ENCODE measurements at regions of chr2 and their contacts with region 1.

Region 1: DNA sequence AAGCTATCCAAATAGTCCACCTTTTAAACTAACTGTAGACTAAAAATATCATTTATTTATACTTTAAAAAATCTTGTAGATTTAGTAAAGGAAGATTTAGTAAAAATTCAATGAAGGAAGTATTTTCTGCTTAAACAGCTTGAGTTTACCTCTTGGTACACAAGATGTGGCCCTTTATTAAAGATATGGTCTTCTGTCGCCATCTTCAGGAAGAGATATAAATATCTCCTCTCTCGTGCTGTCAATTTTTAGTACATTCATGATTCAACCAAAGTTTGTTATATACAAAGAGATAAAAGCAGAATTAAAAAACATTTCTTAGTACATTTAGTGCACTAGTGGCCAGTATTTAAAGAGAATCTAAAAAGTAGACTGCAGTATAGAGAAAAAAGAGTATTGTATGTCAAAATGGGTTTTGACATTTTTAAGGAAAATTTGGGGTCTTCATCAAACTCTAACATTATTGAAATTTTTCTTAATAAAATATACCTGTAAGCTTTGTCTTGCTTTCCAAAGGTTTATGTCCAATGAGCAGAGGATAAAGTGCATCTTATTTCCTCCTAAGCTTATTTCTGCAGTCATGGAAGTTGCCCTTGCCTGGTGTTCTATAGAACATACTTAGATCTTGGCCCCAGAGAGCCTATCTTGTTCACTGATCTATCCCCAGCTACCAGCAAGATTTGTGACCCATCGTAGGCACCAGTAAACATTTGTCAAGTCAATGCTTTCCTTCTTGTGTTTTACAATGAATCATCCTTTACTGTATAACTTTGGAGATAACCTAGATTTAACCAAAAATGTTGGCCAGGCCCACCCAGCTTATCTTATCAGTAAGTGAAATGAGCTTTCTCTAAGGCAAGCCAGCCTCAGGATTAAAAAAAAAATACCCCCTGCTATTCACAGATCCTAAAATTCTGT is 18.5 kb upstream of the EML6 start:
- DNase-seq: no peak
- ATAC-seq: peak; percentile 51
- H3K4me3 Mint-ChIP-seq: no peak overlapping the region
- H3K27ac Mint-ChIP-seq: no peak overlapping the region
- H3K4me1 Mint-ChIP-seq: peaks cover 8% of the 10 kb centered on the region
- H3K27me3 Mint-ChIP-seq: peaks cover 8% of the 10 kb centered on the region
- CTCF ChIP-seq: no peak

Region 2: DNA sequence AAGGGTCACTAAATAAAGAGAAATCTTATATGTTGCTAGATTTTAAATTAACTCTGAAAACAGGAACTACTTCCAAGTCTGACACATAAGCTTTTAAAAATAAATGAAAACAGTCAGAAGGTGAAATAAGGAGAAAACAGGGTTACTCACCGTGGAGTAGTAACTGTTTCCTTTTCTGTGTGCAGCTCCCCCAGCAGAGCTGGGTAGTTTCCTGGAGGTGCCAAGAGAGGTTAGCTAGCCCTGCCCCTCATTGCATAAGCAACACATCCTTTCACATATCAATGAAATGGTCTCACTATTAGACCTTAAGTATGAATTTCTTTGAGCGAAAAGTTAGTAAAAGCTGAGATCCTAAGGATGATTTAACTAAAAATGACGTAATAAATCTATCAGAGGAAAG is 791.2 kb before region 1 on chr2:
- CTCF ChIA-PET with region 1: no interaction called
- POLR2A ChIA-PET with region 1: no interaction called
- intact Hi-C with region 1: loop called (anchors 10 kb)
- DNase-seq: no peak
- ATAC-seq: peak; percentile 85
- H3K4me3 Mint-ChIP-seq: no peak overlapping the region
- H3K27ac Mint-ChIP-seq: peak overlapping the region; percentile 27
- H3K4me1 Mint-ChIP-seq: peaks cover 12% of the 10 kb centered on the region
- H3K27me3 Mint-ChIP-seq: no peaks in the 10 kb centered on the region
- CTCF ChIP-seq: no peak

Region 3: DNA sequence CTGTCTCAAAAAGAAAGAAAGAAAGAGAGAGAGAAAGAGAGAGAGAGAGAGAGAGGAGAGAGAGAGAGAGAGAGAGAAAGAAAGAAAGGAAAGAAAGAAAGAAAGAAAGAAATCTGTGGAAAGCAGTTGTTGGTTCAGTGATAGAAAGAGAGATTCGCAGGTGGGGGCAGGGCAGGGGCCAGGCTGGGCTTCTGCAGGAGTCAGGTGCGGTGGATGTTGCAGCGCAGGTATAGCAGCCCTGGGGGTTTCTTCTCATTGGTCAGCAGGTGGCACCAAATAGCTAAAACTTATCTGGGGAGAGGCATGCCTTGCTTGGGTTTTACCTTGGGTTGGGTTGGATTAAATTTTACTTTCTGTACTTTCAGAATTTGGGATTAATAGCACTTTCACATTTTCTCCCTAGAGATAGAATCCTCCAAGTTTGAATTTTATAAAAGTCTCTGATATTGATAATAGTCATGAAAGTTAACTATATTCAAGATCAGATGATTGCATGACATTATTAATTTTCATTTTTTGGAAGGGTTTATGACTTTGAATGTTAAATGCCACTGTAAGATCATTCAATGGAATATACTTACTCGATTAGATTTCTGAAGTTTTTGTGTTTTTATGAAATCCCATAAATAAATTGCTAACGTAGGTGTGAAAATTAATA is 182.2 kb before region 1 on chr2:
- CTCF ChIA-PET with region 1: interaction called, 130 read pairs
- POLR2A ChIA-PET with region 1: interaction called, 4 read pairs
- intact Hi-C with region 1: loop called (anchors 1 kb)
- DNase-seq: peak; percentile 35
- ATAC-seq: peak; percentile 94
- H3K4me3 Mint-ChIP-seq: no peak overlapping the region
- H3K27ac Mint-ChIP-seq: no peak overlapping the region
- H3K4me1 Mint-ChIP-seq: peaks cover 15% of the 10 kb centered on the region
- H3K27me3 Mint-ChIP-seq: no peaks in the 10 kb centered on the region
- CTCF ChIP-seq: peak; percentile 81

Region 4: GRCh38 chr2:54631755-54632154 is 73.2 kb before region 1 on chr2:
- CTCF ChIA-PET with region 1: no interaction called
- POLR2A ChIA-PET with region 1: no interaction called
- intact Hi-C with region 1: no loop called
- DNase-seq: no peak
- ATAC-seq: no peak
- H3K4me3 Mint-ChIP-seq: no peak overlapping the region
- H3K27ac Mint-ChIP-seq: peak overlapping the region; percentile 53
- H3K4me1 Mint-ChIP-seq: peaks cover 45% of the 10 kb centered on the region
- H3K27me3 Mint-ChIP-seq: no peaks in the 10 kb centered on the region
- CTCF ChIP-seq: no peak

Region 5: DNA sequence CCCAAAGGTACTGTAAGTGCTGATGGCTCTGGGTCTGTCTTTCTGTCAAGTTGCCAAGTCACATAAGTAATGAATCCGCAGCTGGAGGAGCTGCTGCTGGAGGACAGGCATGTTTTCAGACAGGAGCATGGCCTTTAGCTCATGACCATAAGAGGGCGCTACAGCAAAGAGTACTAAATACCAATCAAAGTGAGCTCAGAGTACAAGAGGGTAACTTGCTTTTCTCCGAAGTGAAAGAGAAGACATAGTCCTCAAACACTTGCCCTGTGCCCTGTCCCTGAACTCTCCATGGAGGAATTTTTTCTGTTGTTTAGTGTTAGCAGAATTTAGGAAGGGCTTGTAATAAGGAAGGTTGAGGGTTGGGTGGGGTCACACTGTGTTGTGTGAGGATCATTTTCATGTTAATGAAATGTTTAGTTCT is 39.5 kb before region 1 on chr2:
- CTCF ChIA-PET with region 1: interaction called, 109 read pairs
- POLR2A ChIA-PET with region 1: no interaction called
- intact Hi-C with region 1: loop called (anchors 1 kb)
- DNase-seq: no peak
- ATAC-seq: peak; percentile 52
- H3K4me3 Mint-ChIP-seq: no peak overlapping the region
- H3K27ac Mint-ChIP-seq: no peak overlapping the region
- H3K4me1 Mint-ChIP-seq: no peaks in the 10 kb centered on the region
- H3K27me3 Mint-ChIP-seq: no peaks in the 10 kb centered on the region
- CTCF ChIP-seq: no peak

Region 6: DNA sequence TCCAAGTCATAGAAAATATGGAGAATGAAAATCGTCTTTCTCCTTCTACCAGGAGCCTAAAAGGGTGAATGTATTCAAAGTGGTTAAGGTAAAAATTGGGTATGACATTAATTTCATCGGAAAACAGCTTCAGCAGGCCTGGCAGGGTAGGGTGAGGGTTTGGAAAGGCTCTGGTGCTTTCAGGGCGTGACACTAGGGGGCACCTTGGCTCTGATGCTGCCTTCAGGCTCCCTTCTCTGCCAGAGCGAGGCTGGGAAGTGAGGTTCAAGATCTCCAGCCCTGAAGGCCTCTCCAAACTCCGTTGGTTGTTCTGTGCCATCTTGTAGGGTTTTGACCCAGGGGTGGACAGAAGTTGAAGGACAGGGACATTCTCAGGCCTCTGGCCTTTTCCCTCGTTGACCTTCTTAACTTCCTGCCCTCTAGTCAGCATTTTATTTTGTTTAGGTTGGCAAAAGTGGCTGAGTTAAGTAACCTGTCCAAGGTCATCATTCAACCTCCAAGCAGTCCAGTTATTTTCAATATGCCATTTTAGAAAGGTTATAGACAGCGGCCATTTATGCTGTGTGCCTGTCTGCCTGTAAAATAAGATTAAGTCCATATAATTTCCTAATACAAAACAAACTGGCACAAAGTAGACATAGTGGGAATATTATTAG is 58.8 kb after region 1 on chr2:
- CTCF ChIA-PET with region 1: no interaction called
- POLR2A ChIA-PET with region 1: no interaction called
- intact Hi-C with region 1: no loop called
- DNase-seq: no peak
- ATAC-seq: no peak
- H3K4me3 Mint-ChIP-seq: no peak overlapping the region
- H3K27ac Mint-ChIP-seq: no peak overlapping the region
- H3K4me1 Mint-ChIP-seq: peaks cover 24% of the 10 kb centered on the region
- H3K27me3 Mint-ChIP-seq: no peaks in the 10 kb centered on the region
- CTCF ChIP-seq: no peak

Region 7: GRCh38 chr2:54838585-54839035 is 133.7 kb after region 1 on chr2:
- CTCF ChIA-PET with region 1: interaction called, 22 read pairs
- POLR2A ChIA-PET with region 1: no interaction called
- intact Hi-C with region 1: loop called (anchors 1 kb)
- DNase-seq: peak; percentile 27
- ATAC-seq: peak; percentile 91
- H3K4me3 Mint-ChIP-seq: no peak overlapping the region
- H3K27ac Mint-ChIP-seq: no peak overlapping the region
- H3K4me1 Mint-ChIP-seq: peaks cover 4% of the 10 kb centered on the region
- H3K27me3 Mint-ChIP-seq: no peaks in the 10 kb centered on the region
- CTCF ChIP-seq: peak; percentile 58

Region 8: DNA sequence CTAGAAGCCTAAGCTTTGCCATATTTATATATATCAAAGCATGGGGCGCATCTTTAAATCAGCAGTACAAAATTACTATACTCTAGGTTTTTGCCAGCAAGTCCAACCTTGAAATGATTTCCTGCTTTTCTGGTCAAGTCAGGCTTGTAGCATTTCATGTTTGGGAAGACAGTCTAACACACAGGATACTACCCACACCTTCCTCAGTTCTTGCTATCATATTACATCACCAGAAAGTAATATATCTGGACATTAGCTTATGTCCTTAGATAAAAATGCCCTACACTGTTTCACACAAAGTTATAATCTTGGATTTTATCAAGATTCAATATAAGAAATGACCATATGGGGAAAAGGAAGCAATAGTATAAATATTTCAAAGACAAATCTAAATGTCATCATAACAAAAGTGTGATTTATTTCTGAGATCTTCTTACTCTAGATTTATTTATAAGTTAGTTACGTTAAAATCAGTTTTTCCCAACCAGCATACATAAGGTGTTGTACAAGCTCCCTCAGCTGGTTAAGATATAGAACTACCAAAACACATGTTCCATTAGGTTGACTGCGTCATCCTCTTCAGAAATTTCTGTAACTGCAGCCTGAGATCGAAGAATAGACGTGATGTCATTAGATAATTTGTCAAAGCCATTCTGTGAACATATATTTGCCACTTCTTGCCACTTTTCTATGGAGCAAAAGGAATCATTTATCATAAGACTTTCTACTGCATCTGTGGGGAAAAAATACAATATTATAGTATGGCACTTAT is 470.5 kb after region 1 on chr2:
- CTCF ChIA-PET with region 1: interaction called, 8 read pairs
- POLR2A ChIA-PET with region 1: no interaction called
- intact Hi-C with region 1: loop called (anchors 1 kb)
- DNase-seq: no peak
- ATAC-seq: peak; percentile 86
- H3K4me3 Mint-ChIP-seq: peak overlapping the region; percentile 8
- H3K27ac Mint-ChIP-seq: no peak overlapping the region
- H3K4me1 Mint-ChIP-seq: peaks cover 7% of the 10 kb centered on the region
- H3K27me3 Mint-ChIP-seq: no peaks in the 10 kb centered on the region
- CTCF ChIP-seq: no peak